H1 (cell line): ENCODE measurements at regions of chr10 and their contacts with region 1.

Region 1: DNA sequence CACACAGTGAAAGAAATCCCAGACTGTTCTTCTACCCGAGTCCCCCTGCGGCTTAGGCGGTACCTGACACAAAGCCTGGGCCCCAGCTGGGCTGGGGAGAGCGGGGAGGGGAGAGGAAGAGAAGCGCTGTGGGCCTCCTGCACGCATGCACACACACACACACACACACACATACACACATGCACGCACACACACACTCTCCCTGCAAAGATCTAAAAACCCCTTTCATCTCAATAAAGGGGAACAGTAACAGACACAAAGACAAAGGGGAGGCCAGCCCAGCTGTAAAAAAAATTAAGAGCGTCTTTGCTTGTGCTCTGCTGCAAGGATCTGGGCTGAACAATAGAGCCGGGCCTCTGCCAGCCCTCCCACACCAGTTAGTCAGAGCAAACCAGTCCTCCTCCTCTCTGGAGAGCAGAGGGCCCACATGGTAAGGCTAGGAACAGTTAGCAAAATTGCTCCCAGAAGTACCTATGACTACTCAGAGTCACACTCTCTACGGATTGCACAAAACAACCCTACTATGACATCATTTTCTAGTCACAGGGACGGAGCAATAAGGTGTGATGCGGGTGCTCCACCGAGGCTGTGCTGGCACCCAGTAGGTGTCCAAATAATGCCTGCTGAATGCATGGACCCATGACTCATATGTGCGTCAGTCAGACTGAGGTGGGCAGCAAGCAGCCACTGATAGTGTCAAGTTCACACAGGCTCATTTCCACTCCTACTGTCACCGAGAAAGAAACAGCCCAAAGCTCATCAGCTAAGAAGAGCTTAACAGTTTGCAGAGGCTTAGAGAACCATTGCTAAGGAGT is 9.2 kb downstream of the ITPRIP start:
- DNase-seq: no peak
- H3K4me3 ChIP-seq: peak overlapping the region in 3 of 4 experiments; percentile 17 to 44 (median 24); a peak in 5 of 8 replicates
- H3K27ac ChIP-seq: peak overlapping the region; percentile 87
- H3K4me1 ChIP-seq: peaks cover 48 to 77% (median 58%) of the 10 kb centered on the region in 4 experiments
- H3K27me3 ChIP-seq: no peaks in the 10 kb centered on the region
- CTCF ChIP-seq: no peak
- EP300 ChIP-seq: no peak
- POLR2A ChIP-seq: no peak
- RAD21 ChIP-seq: no peak

Region 2: DNA sequence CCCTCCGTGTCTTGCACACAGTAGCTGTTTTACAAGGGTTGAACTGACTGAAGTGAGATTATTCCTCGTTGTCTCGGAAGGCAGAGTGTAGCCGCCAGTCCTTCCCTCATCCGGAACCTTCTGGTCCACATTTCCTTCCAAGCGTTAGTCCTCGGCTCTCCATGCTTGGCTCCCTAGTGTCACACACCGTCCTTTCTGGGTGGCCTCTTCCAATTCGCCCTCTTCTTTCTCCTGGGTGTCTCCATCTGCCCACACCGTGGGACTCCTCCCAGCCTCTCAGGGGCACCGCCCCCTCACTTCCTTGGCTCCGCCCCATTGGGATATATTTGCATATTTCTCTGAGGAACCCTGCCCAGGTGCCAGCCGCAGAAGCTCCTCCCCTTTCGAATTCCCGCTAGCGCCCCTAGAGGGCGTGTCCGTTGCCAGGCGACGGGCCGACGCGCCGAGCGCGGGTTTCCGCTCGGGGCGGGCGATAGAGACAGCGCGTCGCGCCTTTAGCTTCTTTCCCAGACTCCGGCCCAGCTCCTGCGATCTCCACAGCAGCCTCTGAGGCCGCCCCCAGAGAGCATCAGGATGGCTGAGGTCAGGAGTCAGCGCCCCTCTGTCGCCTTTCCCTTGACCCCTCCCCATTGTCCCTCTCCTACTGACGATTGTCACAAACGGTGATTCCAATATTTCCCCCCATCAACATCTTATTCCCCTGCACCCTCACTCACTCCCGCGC is 24.4 kb after region 1 on chr10 and contains the start of gene CFAP58:
- CTCF ChIA-PET with region 1: interaction called, 166 read pairs
- POLR2A ChIA-PET with region 1: interaction called, 3 read pairs
- DNase-seq: peak; percentile 79 to 98
- H3K4me3 ChIP-seq: peak within 1 kb of the TSS; percentile 35 to 71 (median 52); a peak in 7 of 8 replicates
- H3K27ac ChIP-seq: no peak within 1 kb of the TSS
- H3K4me1 ChIP-seq: peaks cover 0 to 9% (median 1%) of the 10 kb centered on the region in 4 experiments; a peak in 2 of 7 replicates
- H3K27me3 ChIP-seq: peaks cover 5 to 13% (median 10%) of the 10 kb centered on the region in 4 experiments
- CTCF ChIP-seq: peak; percentile 67 to 80 (median 69)
- EP300 ChIP-seq: no peak
- POLR2A ChIP-seq: no peak
- RAD21 ChIP-seq: peak; percentile 12 to 27; a peak in 2 of 4 replicates
- total RNA-seq, gene CFAP58: 0.71 and 1.1 TPM in 2 replicates